SK-N-SH (cell line): ENCODE measurements at regions of chr15 and their contacts with region 1.

Region 1: GRCh38 chr15:79028411-79028964 is 62.1 kb downstream of the RASGRF1 start:
- DNase-seq: peak; percentile 79
- H3K4me3 ChIP-seq: no peak overlapping the region; a peak in 1 of 4 replicates
- H3K27ac ChIP-seq: no peak overlapping the region
- H3K4me1 ChIP-seq: no peaks in the 10 kb centered on the region; a peak in 1 of 4 replicates
- H3K27me3 ChIP-seq: no peaks in the 10 kb centered on the region; the same call in 1 of the 2 replicates
- CTCF ChIP-seq: peak; percentile 88
- EP300 ChIP-seq: no peak
- RAD21 ChIP-seq: peak; percentile 94

Region 2: DNA sequence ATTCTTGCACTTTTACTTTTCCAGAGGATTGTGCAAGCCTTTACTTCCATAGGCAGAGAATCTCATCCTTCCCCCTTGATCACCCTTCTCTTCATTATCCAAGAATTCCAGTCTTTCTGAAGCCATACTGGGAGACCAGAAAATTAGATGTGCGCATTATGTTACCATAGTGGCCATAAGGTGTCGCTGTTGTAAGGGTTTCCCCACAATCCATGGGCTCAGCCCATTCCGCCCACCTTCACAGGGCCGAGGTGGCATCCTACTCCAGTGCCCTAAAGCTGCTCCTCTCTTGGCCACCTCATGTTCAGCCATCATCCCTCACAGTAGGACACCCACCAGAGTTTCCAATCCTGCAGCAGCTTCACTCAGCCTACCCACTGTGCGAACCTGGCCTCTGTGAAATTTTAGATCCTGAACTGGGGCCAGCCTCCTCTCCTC is 118.7 kb before region 1 on chr15:
- CTCF ChIA-PET with region 1: interaction called, 29 read pairs
- POLR2A ChIA-PET with region 1: no interaction called
- DNase-seq: peak; percentile 72
- H3K4me3 ChIP-seq: no peak overlapping the region; a peak in 1 of 4 replicates
- H3K27ac ChIP-seq: no peak overlapping the region
- H3K4me1 ChIP-seq: peaks cover 0 to 11% of the 10 kb centered on the region in 2 experiments; a peak in 3 of 4 replicates
- H3K27me3 ChIP-seq: no peaks in the 10 kb centered on the region
- CTCF ChIP-seq: peak; percentile 78
- EP300 ChIP-seq: no peak
- RAD21 ChIP-seq: peak; percentile 78

Region 3: GRCh38 chr15:79007066-79007465 is 21.4 kb before region 1 on chr15:
- CTCF ChIA-PET with region 1: interaction called, 12 read pairs
- POLR2A ChIA-PET with region 1: no interaction called
- DNase-seq: peak; percentile 45
- H3K4me3 ChIP-seq: no peak overlapping the region; a peak in 1 of 4 replicates
- H3K27ac ChIP-seq: no peak overlapping the region
- H3K4me1 ChIP-seq: peaks cover 8 to 13% of the 10 kb centered on the region in 2 experiments; a peak in 2 of 4 replicates
- H3K27me3 ChIP-seq: no peaks in the 10 kb centered on the region
- CTCF ChIP-seq: peak; percentile 50
- EP300 ChIP-seq: no peak
- RAD21 ChIP-seq: peak; percentile 16; the same call in 1 of the 2 replicates

Region 4: GRCh38 chr15:79042213-79042928 is 13.9 kb after region 1 on chr15:
- CTCF ChIA-PET with region 1: interaction called, 24 read pairs
- POLR2A ChIA-PET with region 1: no interaction called
- DNase-seq: no peak
- H3K4me3 ChIP-seq: no peak overlapping the region
- H3K27ac ChIP-seq: no peak overlapping the region
- H3K4me1 ChIP-seq: peaks cover 0 to 8% of the 10 kb centered on the region in 2 experiments; a peak in 1 of 4 replicates
- H3K27me3 ChIP-seq: peaks cover 4% of the 10 kb centered on the region; the same call in 1 of the 2 replicates
- CTCF ChIP-seq: no peak
- EP300 ChIP-seq: no peak
- RAD21 ChIP-seq: no peak

Region 5: DNA sequence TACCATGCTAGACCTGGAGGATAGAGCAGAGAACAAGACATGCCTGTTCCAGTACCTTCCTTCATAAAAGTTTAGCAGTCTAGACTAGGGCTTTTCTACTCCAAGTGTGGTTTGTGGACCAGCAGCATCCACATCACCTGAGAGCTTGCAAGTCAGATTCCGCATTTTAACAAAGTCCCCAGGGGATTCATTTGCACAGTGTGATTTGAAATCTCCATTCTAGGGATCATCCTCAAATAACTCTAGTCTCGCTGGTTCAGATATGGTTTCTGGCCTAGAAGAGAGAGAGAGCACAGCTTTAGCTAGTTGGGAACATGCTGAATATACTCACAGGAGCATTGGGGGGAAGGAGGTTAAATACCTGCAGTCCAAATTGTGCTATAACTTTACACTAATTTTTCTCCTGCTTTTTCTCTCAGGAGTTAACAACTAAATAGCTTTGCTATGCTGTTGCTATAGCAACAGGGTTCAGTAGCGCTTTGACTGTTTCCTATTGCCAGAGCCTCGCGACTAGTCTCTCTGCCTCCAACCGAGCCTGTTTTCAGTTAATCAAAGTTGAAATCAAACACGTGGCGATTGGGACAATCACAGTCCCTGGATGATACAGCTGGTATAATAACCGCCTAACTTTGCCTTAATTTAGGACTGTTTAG is 126.1 kb after region 1 on chr15:
- CTCF ChIA-PET with region 1: interaction called, 12 read pairs
- POLR2A ChIA-PET with region 1: no interaction called
- DNase-seq: peak; percentile 42
- H3K4me3 ChIP-seq: no peak overlapping the region
- H3K27ac ChIP-seq: no peak overlapping the region
- H3K4me1 ChIP-seq: peaks cover 0 to 8% of the 10 kb centered on the region in 2 experiments; a peak in 2 of 4 replicates
- H3K27me3 ChIP-seq: no peaks in the 10 kb centered on the region
- CTCF ChIP-seq: no peak
- EP300 ChIP-seq: no peak
- RAD21 ChIP-seq: no peak

Region 6: GRCh38 chr15:79192462-79193036 is 164.1 kb after region 1 on chr15:
- CTCF ChIA-PET with region 1: interaction called, 629 read pairs
- POLR2A ChIA-PET with region 1: no interaction called
- DNase-seq: no peak
- H3K4me3 ChIP-seq: no peak overlapping the region
- H3K27ac ChIP-seq: no peak overlapping the region
- H3K4me1 ChIP-seq: no peaks in the 10 kb centered on the region; a peak in 1 of 4 replicates
- H3K27me3 ChIP-seq: no peaks in the 10 kb centered on the region
- CTCF ChIP-seq: no peak
- EP300 ChIP-seq: no peak
- RAD21 ChIP-seq: no peak